Stomach (tissue), 19 donors: ENCODE measurements at regions of chr18 and their contacts with region 1.

Region 1: GRCh38 chr18:65876290-65876689 is 125.5 kb downstream of the CDH7 start:
- DNase-seq: no peak
- H3K4me3 ChIP-seq: no peak overlapping the region
- H3K27ac ChIP-seq: no peak overlapping the region
- H3K4me1 ChIP-seq: no peaks in the 10 kb centered on the region
- H3K27me3 ChIP-seq: no peaks in the 10 kb centered on the region
- CTCF ChIP-seq: no peak
- EP300 ChIP-seq: no peak
- POLR2A ChIP-seq: no peak

Region 2: GRCh38 chr18:65938592-65939372 is 62.5 kb after region 1 on chr18:
- intact Hi-C with region 1: loop called (anchors 10 kb)
- DNase-seq: peak in 1 of 2 donors; percentile 26
- H3K4me3 ChIP-seq: no peak overlapping the region
- H3K27ac ChIP-seq: no peak overlapping the region
- H3K4me1 ChIP-seq: no peaks in the 10 kb centered on the region
- H3K27me3 ChIP-seq: no peaks in the 10 kb centered on the region
- CTCF ChIP-seq: no peak
- EP300 ChIP-seq: no peak
- POLR2A ChIP-seq: no peak